Right cardiac atrium (tissue), 5 donors: ENCODE measurements at regions of chr11 and their contacts with region 1.

Region 1: GRCh38 chr11:11577251-11577855 is 44.5 kb downstream of the GALNT18 start:
- DNase-seq: peak in 2 of 3 donors; percentile 31 to 53
- ATAC-seq: peak in 1 of 2 donors; percentile 88
- H3K4me3 ChIP-seq: no peak overlapping the region
- H3K27ac ChIP-seq: peak overlapping the region; percentile 3
- H3K4me1 ChIP-seq: peaks cover 15% of the 10 kb centered on the region
- H3K27me3 ChIP-seq: no peaks in the 10 kb centered on the region

Region 2: GRCh38 chr11:11538277-11538960 is 38.9 kb before region 1 on chr11:
- intact Hi-C with region 1: loop called in 1 of 4 experiments (anchors 5 kb)
- DNase-seq: peak; percentile 59 to 92 (median 85)
- ATAC-seq: peak; percentile 70 to 82
- H3K4me3 ChIP-seq: no peak overlapping the region
- H3K27ac ChIP-seq: peak overlapping the region; percentile 65
- H3K4me1 ChIP-seq: peaks cover 18% of the 10 kb centered on the region
- H3K27me3 ChIP-seq: no peaks in the 10 kb centered on the region

Region 3: DNA sequence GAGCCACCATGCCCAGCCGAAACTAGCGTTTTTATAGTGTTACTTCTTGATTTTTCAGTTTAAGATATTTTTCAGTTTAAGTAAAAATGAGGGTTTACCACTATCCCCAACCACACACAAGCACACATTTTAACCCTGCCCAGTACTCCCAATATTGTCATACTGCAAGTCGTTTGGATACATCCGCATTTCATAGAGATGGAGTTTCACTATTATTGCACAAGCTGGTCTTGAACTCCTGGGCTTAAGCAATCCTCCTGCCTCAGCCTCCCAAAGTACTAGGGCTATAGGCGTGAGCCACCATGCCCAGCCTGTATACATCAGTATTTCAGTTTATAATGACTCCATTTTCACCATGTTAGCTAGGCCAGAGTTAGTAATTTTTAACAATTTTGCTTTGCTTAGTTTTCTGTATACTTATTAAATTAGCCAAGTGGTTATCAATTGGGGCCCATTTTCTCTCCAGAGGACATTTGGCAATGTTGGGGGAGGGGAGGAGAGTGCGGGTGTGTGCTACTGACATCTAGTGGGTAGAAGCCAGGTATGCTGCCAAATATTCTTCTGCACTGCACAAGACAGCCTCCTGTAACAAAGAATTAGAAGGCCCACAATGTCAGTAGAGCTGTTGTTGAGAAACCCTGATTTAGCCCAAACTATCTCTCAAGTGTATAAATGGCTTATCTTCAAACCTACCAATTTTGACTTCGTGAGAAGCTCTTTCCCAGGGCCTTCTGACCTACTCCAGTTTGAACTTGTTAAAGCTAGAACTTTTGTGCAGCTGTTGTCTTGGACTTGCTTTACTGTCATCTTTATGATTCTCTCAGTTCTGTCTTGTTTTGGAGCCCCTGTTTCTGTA is 271.8 kb after region 1 on chr11:
- intact Hi-C with region 1: no loop called
- DNase-seq: peak; percentile 47 to 80 (median 70)
- ATAC-seq: peak; percentile 81 to 85
- H3K4me3 ChIP-seq: no peak overlapping the region
- H3K27ac ChIP-seq: no peak overlapping the region
- H3K4me1 ChIP-seq: peaks cover 13% of the 10 kb centered on the region
- H3K27me3 ChIP-seq: no peaks in the 10 kb centered on the region